Aorta (tissue), 5 donors: ENCODE measurements at regions of chr2 and their contacts with region 1.

Region 1: GRCh38 chr2:25276569-25277465 is 64.9 kb downstream of the DNMT3A start:
- DNase-seq: peak; percentile 86 to 93
- ATAC-seq: peak; percentile 73
- H3K4me3 ChIP-seq: peak overlapping the region; percentile 1 to 52
- H3K27ac ChIP-seq: peak overlapping the region; percentile 14 to 52
- H3K4me1 ChIP-seq: no peaks in the 10 kb centered on the region
- H3K27me3 ChIP-seq: no peaks in the 10 kb centered on the region

Region 2: DNA sequence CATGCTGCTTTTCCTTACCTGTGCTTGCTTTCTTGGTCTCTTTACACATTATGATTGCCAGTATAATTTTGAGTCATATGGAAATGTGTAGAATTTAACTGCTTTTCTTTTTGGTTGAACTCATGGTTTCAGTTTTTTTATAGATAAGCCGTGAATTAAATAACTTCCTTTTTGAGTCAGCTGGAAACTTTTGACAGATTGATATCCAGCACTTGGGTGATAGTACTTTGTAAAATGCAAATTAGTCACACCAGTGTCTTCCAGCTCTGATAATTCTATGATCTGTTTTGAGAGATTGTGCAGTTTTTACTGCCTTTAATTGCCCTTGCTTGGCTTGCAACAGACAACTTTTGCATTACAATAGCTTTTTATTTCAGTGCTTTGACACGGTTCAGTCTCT is 699.3 kb before region 1 on chr2:
- intact Hi-C with region 1: no loop called
- DNase-seq: no peak
- ATAC-seq: no peak
- H3K4me3 ChIP-seq: no peak overlapping the region
- H3K27ac ChIP-seq: no peak overlapping the region
- H3K4me1 ChIP-seq: peaks cover 2% of the 10 kb centered on the region in 2 donors
- H3K27me3 ChIP-seq: no peaks in the 10 kb centered on the region

Region 3: DNA sequence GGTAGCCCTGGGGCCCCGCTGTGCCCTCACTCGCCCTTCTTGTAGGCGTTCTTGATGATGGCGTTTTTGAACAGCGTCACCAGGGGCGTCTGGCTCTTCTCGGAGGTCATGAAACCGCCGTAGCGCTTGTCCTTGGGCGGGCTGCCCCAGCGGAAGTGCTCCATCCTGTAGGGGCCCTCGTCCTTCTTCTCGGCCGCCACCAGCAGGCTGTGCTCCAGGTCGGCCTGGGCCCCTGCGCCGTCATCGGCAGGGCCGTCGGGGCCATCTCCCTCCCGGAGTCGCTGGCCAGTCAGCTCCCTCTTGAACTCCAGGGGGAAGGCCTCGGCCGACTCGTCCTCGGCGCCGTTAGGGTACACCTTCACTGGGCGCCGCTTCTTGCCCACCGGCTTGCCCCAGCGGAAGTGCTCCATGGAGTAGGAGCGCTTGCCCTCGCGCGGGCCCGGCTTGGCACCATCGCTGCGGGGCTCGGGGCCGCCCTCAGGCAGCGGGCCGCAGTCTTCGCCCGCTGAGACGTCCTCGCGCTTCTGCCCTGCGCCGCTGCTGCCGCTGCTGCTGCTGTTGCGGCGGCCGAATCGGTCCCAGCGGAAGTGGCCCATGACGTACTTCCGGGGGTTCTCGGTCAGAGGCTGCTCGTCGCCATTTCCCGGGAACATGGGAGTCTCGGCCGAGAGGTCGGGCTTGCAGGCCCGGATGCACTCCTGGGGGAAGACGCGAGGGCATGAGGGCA is 115.6 kb before region 1 on chr2:
- intact Hi-C with region 1: no loop called
- DNase-seq: peak; percentile 81 to 87
- ATAC-seq: peak; percentile 41
- H3K4me3 ChIP-seq: peak overlapping the region in 1 of 2 donors; percentile 16
- H3K27ac ChIP-seq: no peak overlapping the region
- H3K4me1 ChIP-seq: no peaks in the 10 kb centered on the region
- H3K27me3 ChIP-seq: no peaks in the 10 kb centered on the region

Region 4: GRCh38 chr2:25323042-25323514 is 46.3 kb after region 1 on chr2:
- intact Hi-C with region 1: loop called in 1 of 2 experiments (anchors 5 kb)
- DNase-seq: peak; percentile 40 to 66
- ATAC-seq: no peak
- H3K4me3 ChIP-seq: no peak overlapping the region
- H3K27ac ChIP-seq: no peak overlapping the region
- H3K4me1 ChIP-seq: no peaks in the 10 kb centered on the region
- H3K27me3 ChIP-seq: no peaks in the 10 kb centered on the region

Region 5: GRCh38 chr2:25342372-25343186 is 65.8 kb after region 1 on chr2:
- intact Hi-C with region 1: loop called (anchors 5 kb)
- DNase-seq: peak; percentile 90 to 94
- ATAC-seq: peak; percentile 92
- H3K4me3 ChIP-seq: peak overlapping the region; percentile 87 to 96
- H3K27ac ChIP-seq: peak overlapping the region in 1 of 2 donors; percentile 42
- H3K4me1 ChIP-seq: no peaks in the 10 kb centered on the region
- H3K27me3 ChIP-seq: no peaks in the 10 kb centered on the region